Breast epithelium (tissue), 4 donors: ENCODE measurements at regions of chr6 and their contacts with region 1.

Region 1: GRCh38 chr6:53641348-53641747 is 24.2 kb downstream of the KLHL31 start:
- DNase-seq: no peak
- H3K4me3 ChIP-seq: no peak overlapping the region
- H3K27ac ChIP-seq: no peak overlapping the region
- H3K4me1 ChIP-seq: no peaks in the 10 kb centered on the region
- H3K27me3 ChIP-seq: no peaks in the 10 kb centered on the region
- CTCF ChIP-seq: no peak
- POLR2A ChIP-seq: no peak

Region 2: GRCh38 chr6:52815167-52816092 is 825.9 kb before region 1 on chr6:
- intact Hi-C with region 1: no loop called
- DNase-seq: peak in 1 of 2 donors; percentile 24
- H3K4me3 ChIP-seq: no peak overlapping the region
- H3K27ac ChIP-seq: no peak overlapping the region
- H3K4me1 ChIP-seq: no peaks in the 10 kb centered on the region
- H3K27me3 ChIP-seq: no peaks in the 10 kb centered on the region
- CTCF ChIP-seq: peak in 2 of 3 donors; percentile 53 to 59
- POLR2A ChIP-seq: no peak

Region 3: GRCh38 chr6:53588816-53589509 is 52.4 kb before region 1 on chr6:
- intact Hi-C with region 1: loop called (anchors 2 kb)
- DNase-seq: no peak
- H3K4me3 ChIP-seq: no peak overlapping the region
- H3K27ac ChIP-seq: no peak overlapping the region
- H3K4me1 ChIP-seq: no peaks in the 10 kb centered on the region
- H3K27me3 ChIP-seq: no peaks in the 10 kb centered on the region
- CTCF ChIP-seq: no peak
- POLR2A ChIP-seq: no peak

Region 4: DNA sequence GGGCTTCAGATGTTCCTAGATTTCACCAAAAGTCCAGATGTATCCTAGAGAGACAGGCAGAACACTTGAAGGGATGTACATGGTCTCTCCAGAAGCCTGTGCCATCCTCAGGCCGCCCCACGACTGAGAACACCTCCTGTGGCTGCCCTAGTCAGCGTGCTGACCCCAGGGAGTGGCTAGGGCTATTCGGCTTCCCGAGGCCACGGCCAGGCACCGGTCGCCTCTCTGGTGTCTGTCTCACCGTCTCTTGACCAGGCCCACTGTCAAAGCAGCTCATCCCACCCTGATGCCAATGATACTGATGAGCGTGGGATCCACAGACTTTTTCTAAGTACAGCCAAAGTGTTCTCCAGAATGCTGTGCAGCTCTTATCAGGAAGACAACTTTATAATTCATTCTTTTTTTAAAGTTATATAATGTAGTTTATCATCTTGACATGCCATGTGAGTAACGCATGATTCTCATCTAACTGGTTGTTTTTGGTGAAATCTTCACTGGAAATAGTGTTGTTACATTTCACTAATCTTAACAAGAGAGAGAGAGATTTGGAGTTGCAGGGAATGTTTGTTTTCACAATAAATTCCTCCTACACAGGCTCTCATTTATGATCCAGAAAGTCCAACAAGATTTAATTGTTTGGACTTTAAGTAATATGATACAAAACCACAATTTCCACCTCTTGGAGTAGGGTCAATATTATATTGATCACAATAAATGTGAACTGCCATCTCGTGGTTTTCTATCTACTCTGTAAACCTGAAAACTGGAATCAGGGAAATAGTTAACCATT is 66.0 kb after region 1 on chr6:
- intact Hi-C with region 1: no loop called
- DNase-seq: no peak
- H3K4me3 ChIP-seq: no peak overlapping the region
- H3K27ac ChIP-seq: no peak overlapping the region
- H3K4me1 ChIP-seq: no peaks in the 10 kb centered on the region
- H3K27me3 ChIP-seq: no peaks in the 10 kb centered on the region
- CTCF ChIP-seq: no peak
- POLR2A ChIP-seq: no peak